Panc1 (cell line): ENCODE measurements at regions of chr6 and their contacts with region 1.

Region 1: GRCh38 chr6:8299034-8299433 is 136.3 kb downstream of the SLC35B3 start:
- DNase-seq: no peak
- ATAC-seq: no peak
- H3K4me3 ChIP-seq: no peak overlapping the region
- H3K27ac ChIP-seq: no peak overlapping the region
- H3K4me1 ChIP-seq: no peaks in the 10 kb centered on the region
- H3K27me3 ChIP-seq: no peaks in the 10 kb centered on the region
- CTCF ChIP-seq: no peak

Region 2: GRCh38 chr6:8143945-8144344 is 155.1 kb before region 1 on chr6:
- CTCF ChIA-PET with region 1: no interaction called
- POLR2A ChIA-PET with region 1: interaction called, 13 read pairs
- in situ Hi-C with region 1: no loop called
- intact Hi-C with region 1: no loop called
- DNase-seq: no peak
- ATAC-seq: no peak
- H3K4me3 ChIP-seq: no peak overlapping the region
- H3K27ac ChIP-seq: no peak overlapping the region
- H3K4me1 ChIP-seq: 0 out of 2 replicates have a peak, but pooled peaks cover 5% of the 10 kb centered on the region
- H3K27me3 ChIP-seq: no peaks in the 10 kb centered on the region
- CTCF ChIP-seq: no peak

Region 3: DNA sequence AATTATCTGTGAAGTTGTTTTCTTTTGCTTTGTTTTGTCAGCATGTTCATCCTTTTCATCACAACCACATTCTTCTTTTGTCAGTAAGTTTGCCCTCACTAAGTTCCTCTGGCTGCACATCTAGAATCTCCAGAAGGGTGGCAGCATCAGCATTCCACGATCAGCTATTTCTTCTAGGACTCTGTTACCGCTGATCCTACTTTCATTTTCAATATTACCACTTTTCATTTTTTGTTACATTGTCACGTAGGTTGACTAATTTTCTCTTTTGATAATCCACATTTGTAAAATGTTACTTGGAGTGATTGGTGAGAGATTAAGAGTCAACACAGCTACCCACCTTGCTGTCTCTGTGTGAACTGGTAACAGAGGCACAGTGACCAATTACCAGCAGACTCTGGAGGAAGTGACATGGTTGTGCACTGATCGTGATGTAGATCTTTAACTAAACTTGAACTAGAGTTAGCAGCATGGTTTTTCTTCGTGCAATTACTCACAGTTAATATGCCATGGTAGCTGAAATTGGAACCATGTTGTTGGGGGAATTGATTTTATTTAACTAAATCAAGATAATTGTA is 444.2 kb after region 1 on chr6:
- CTCF ChIA-PET with region 1: no interaction called
- POLR2A ChIA-PET with region 1: no interaction called
- in situ Hi-C with region 1: no loop called
- intact Hi-C with region 1: no loop called
- DNase-seq: peak; percentile 13
- ATAC-seq: peak; percentile 86
- H3K4me3 ChIP-seq: peak overlapping the region; percentile 26 to 50
- H3K27ac ChIP-seq: no peak overlapping the region
- H3K4me1 ChIP-seq: no peaks in the 10 kb centered on the region
- H3K27me3 ChIP-seq: no peaks in the 10 kb centered on the region
- CTCF ChIP-seq: peak; percentile 45; the same call in 1 of the 2 replicates